Activated naive CD4-positive, alpha-beta T cell treated with anti-CD3 and anti-CD28 coated beads for 36 hours (primary cell): ENCODE measurements at regions of chr17 and their contacts with region 1.

Region 1: DNA sequence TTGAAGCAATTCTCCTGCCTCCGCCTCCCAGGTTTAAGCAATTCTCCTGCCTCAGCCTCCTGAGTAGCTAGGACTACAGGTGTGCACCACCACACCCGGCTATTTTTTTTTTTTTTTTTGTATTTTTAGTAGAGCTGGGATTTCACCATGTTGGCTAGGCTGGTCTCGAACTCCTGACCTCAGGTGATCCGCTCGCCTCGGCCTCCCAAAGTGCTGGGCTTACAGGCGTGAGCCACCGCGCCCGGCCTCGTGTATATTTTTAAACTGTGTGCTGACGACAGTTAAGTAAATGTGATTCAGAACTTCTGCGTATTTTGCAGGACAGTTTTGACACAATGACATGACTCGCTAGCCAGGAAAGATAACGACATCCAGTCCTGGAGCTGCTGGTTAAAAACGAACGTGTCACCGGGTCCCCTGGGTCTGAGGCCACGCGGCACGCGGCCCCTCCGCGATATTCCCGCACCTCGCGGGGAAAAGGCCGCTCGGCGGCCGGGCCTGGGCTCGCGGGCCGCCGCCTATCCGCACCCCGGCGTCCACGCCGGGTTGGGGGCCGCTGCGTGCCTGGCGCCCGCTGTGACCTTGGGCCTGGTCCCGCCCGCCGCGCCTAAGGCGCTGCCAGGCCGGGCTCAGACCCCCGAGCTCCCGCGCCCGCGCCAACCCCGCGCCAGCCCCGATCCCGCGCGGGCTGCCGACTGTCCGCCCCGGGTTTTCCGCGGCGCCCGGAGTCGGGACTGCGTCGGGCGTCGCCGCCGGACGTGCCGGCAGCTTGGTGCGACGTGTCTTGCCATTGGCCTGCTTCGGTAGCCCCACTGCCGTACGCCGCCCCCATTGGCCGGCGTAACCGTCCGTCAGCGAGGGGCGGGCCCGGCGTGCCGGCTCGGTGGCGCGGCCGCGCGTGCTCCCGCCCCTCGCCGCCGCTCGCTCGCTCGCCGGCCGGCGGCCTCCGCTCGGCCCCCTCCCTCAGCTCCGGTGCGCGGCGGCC is at the start of gene FOXK2:
- DNase-seq: peak; percentile 93
- H3K4me3 Mint-ChIP-seq: peak within 1 kb of the TSS; percentile 88
- H3K27ac Mint-ChIP-seq: peak within 1 kb of the TSS; percentile 84
- H3K4me1 Mint-ChIP-seq: peaks cover 26% of the 10 kb centered on the region
- H3K27me3 Mint-ChIP-seq: no peaks in the 10 kb centered on the region
- total RNA-seq, gene FOXK2: 48.8 to 51.4 TPM

Region 2: DNA sequence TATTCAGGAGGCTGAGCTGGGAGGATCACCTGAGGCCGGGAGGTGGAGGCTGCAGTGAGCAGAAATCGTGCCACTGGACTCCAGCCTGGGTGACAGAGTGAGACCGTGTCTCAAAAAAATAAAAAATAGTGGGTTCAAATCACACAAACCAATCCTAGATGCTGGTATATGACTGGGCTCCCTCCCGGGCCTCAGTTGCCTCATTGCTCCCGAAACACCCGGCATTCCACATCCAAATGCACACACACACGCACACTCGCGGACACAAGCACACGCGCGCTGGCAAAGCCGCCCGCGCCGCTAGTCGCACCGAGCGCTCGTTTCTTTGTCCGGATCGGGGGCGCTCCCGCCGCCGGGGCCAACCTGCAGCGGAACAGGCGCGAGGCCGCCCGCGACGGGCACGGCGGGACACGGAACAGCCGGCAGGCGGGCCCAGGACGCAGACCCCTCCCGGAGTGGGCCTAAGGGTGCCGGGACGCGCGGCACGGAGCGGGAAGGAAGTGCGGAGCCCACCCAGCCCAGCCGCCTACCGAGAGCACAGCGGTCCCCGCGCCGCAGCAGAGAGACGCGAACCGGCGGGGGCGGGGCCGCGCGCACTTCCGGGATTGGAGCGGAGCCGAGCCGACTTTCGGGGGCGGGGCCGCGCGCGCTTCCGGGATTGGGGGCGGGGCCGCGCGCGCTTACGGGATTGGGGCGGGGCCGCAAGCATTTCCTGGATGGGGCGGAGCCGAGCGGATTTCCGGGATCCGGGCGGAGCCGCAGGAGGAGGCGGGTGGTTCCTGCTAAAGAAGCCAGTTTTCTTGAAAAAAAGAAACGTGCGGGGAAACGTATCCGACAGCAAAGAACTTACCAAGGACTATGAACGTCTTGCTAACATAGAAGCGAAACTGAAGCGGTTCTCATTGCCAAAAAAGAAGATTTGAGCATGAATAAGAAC is 68.7 kb before region 1 on chr17 and contains the start of gene CYBC1:
- CTCF ChIA-PET with region 1: no interaction called
- intact Hi-C with region 1: loop called (anchors 2 kb)
- DNase-seq: peak; percentile 97
- H3K4me3 Mint-ChIP-seq: peak within 1 kb of the TSS; percentile 94
- H3K27ac Mint-ChIP-seq: peak within 1 kb of the TSS; percentile 99
- H3K4me1 Mint-ChIP-seq: peaks cover 41% of the 10 kb centered on the region
- H3K27me3 Mint-ChIP-seq: no peaks in the 10 kb centered on the region
- total RNA-seq, gene CYBC1: 292 to 294 TPM

Region 3: GRCh38 chr17:82457997-82458864 is 60.9 kb before region 1 on chr17 and contains the start of gene NARF:
- CTCF ChIA-PET with region 1: no interaction called
- intact Hi-C with region 1: loop called (anchors 1 kb)
- DNase-seq: peak; percentile 97
- H3K4me3 Mint-ChIP-seq: peak within 1 kb of the TSS; percentile 78
- H3K27ac Mint-ChIP-seq: peak within 1 kb of the TSS; percentile 97
- H3K4me1 Mint-ChIP-seq: peaks cover 27% of the 10 kb centered on the region
- H3K27me3 Mint-ChIP-seq: no peaks in the 10 kb centered on the region
- total RNA-seq, gene NARF: 64.2 to 69.3 TPM

Region 4: DNA sequence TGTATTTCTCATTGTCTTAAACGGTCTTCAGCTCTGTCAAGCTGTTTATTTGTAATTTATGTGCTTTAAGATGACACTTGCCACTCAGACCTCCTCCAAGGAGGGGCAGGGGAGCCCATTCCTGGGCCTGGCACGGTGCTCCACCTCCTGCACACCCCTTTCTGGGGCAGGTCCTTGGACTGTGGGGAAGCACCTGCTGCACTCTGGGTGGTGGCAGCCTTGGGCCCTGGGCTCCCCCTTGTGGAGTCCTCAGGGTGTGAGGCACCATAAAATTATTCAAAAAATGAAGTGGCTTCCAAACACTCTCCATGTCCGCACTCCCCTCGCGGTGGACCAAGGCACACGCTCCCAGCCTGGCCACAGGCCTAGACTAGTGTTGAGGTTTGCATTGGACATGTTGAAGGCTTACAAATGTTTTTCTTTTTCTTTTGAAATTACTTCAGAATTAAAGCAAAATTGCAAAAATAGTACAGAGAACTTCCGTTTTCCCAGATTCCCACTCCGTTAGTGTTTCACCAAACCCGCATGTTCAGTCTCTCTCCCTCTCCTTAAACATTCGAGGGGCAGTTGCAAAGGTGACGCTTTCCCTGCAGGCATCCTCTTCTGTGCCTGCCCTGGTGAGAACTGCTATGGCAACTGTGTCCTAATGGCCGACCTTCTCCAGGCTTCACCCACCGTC is 32.8 kb after region 1 on chr17:
- CTCF ChIA-PET with region 1: interaction called, 4 read pairs
- intact Hi-C with region 1: loop called (anchors 1 kb)
- DNase-seq: peak; percentile 90
- H3K4me3 Mint-ChIP-seq: no peak overlapping the region
- H3K27ac Mint-ChIP-seq: peak overlapping the region; percentile 54
- H3K4me1 Mint-ChIP-seq: peaks cover 32% of the 10 kb centered on the region
- H3K27me3 Mint-ChIP-seq: no peaks in the 10 kb centered on the region